PC-9 (cell line): ENCODE measurements at regions of chr4 and their contacts with region 1.

Region 1: DNA sequence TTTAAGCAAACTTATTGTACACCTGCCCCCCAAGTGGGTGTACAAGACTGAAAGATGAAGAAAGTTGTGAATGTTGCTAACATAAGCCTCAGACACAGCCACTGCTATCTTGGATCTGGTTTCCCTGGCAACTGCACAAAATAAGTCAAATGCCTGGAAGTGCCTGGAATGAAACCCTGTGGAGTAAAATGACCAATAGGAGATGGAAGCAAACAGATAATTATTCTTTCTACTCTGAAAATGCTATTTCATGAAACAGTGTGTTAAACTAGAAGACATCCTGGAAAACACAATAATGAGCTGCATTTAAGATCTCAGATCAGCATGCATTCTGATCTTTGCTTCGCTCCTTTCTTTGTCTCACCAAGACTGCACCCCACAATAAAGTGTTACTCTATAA is 1016.0 kb downstream of the ARAP2 start:
- DNase-seq: no peak
- H3K4me3 ChIP-seq: no peak overlapping the region
- H3K27ac ChIP-seq: no peak overlapping the region
- H3K4me1 ChIP-seq: no peaks in the 10 kb centered on the region
- H3K27me3 ChIP-seq: no peaks in the 10 kb centered on the region
- CTCF ChIP-seq: no peak

Region 2: DNA sequence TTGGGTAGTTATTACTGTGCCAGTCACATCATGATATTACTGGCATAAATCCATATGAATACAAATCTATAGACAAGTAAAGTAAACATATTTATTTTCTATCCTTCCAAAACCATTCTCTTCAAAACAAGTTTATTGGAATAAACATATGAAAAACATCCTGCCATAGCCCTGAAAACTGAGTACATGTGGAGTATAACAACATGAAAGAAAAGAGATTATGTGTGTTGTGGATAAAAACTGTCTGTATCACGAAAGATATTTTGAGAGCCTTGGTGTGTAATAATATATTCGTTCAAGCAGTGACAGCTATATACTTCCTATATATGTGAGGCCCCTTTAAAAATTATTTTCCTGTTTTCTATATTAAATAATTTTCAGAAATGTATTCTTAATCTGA is 726.2 kb before region 1 on chr4:
- CTCF ChIA-PET with region 1: no interaction called
- POLR2A ChIA-PET with region 1: no interaction called
- intact Hi-C with region 1: no loop called
- DNase-seq: no peak
- H3K4me3 ChIP-seq: no peak overlapping the region
- H3K27ac ChIP-seq: no peak overlapping the region
- H3K4me1 ChIP-seq: no peaks in the 10 kb centered on the region
- H3K27me3 ChIP-seq: no peaks in the 10 kb centered on the region
- CTCF ChIP-seq: no peak

Region 3: DNA sequence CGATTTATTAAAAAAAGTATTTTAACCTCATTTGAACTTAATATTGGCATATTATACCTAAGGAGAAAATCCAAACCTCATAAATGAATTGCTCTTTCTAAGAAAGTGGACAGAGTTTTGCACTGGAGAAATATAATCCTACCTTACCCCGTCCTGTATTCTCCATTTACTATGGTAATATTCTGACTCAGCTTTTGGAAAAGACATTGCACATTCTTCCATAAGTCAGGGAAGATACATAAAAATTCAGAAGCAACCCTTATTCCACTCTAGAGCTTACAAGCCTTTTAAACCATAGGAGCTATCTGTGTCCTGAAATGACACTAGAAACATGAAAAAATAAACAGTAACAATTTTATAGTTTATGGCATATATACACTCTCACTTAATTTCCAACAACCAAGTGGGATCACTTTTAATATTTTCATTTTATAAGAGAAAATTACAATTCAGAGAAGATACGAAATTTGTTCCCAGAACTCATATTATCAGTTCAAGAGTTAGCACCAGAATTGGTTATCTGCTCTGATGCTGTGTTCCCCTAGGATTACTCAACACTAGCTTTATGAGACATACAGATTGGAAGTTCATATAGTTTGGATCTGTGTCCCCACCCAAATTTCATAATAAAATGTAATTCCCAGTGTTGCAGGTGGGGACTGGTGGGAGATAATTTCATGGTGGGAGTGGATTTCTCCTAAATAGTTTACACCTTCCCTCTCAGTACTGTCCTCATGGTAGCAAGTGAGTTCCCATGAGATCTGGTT is 656.6 kb after region 1 on chr4:
- CTCF ChIA-PET with region 1: no interaction called
- POLR2A ChIA-PET with region 1: interaction called, 12 read pairs
- intact Hi-C with region 1: no loop called
- DNase-seq: no peak
- H3K4me3 ChIP-seq: no peak overlapping the region
- H3K27ac ChIP-seq: no peak overlapping the region
- H3K4me1 ChIP-seq: no peaks in the 10 kb centered on the region
- H3K27me3 ChIP-seq: no peaks in the 10 kb centered on the region
- CTCF ChIP-seq: no peak